ENCODE measurements at regions of chr7 and their contacts with region 1.

Region 1: DNA sequence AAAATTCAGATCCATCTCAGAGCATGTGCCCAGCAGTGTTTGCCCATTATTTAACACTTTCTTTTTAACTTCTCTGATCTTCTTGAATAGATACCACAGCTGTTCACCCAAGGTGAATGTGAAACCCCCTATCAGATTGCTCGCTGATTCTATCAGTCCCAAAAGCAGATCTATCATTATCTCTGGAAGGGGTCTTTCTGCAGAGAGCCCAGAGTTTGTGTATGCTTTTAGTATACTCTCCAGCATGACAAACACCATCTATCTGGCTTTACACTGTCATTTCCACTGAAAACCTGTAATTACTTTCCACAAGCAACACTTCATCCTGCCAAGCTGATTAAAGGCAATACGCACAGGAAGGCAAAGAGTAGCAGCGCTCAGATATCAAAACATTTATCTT is 168.2 kb downstream of the CACNA2D1 start:
- DNase-seq: no peak
- ATAC-seq: no peak
- H3K4me3 ChIP-seq: no peak overlapping the region
- H3K27ac ChIP-seq: no peak overlapping the region
- H3K4me1 ChIP-seq: peaks cover 0 to 18% (median 0%) of the 10 kb centered on the region in 12 donors
- H3K27me3 ChIP-seq: no peaks in the 10 kb centered on the region
- CTCF ChIP-seq: no peak
- POLR2A ChIP-seq: no peak

Region 2: GRCh38 chr7:82335927-82336326 is 60.6 kb after region 1 on chr7:
- intact Hi-C with region 1: loop called in 1 of 10 experiments (anchors 10 kb)
- DNase-seq: peak in 1 of 5 donors; percentile 18
- ATAC-seq: peak in 3 of 4 donors; percentile 22 to 50 (median 36)
- H3K4me3 ChIP-seq: no peak overlapping the region
- H3K27ac ChIP-seq: no peak overlapping the region
- H3K4me1 ChIP-seq: peaks cover 0 to 4% (median 0%) of the 10 kb centered on the region in 12 donors
- H3K27me3 ChIP-seq: no peaks in the 10 kb centered on the region
- CTCF ChIP-seq: no peak
- POLR2A ChIP-seq: no peak

Measured in heart left ventricle (tissue), 16 donors.